ENCODE measurements at regions of chr22 and their contacts with region 1.

Region 1: DNA sequence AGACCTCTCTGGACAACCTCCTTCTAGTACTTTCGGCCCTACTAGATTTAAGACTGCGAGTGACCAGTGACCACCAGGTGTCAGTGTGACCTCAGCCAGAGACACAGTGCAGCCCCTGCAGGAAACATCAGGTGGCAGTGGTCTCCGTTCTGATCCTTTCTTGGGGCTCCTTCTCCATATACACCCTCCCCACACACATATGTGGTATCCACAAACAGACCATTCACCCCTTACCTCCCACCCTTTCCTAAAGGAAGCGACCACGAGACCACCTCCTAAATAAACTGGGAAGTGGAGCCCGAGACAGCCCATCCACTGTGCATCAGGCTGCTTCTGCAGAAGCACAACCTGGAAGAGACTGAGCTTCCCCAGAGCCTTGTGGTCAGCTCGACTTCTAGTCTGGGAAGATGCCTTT is 38.5 kb upstream of the CYP2D6 start:
- DNase-seq: peak; percentile 89
- H3K4me3 Mint-ChIP-seq: no peak overlapping the region
- H3K27ac Mint-ChIP-seq: peak overlapping the region; percentile 29
- H3K4me1 Mint-ChIP-seq: peaks cover 10% of the 10 kb centered on the region
- H3K27me3 Mint-ChIP-seq: no peaks in the 10 kb centered on the region

Region 2: GRCh38 chr22:42151924-42152635 is 17.0 kb before region 1 on chr22:
- intact Hi-C with region 1: no loop called
- DNase-seq: no peak
- H3K4me3 Mint-ChIP-seq: no peak overlapping the region
- H3K27ac Mint-ChIP-seq: no peak overlapping the region
- H3K4me1 Mint-ChIP-seq: no peaks in the 10 kb centered on the region
- H3K27me3 Mint-ChIP-seq: no peaks in the 10 kb centered on the region

Region 3: DNA sequence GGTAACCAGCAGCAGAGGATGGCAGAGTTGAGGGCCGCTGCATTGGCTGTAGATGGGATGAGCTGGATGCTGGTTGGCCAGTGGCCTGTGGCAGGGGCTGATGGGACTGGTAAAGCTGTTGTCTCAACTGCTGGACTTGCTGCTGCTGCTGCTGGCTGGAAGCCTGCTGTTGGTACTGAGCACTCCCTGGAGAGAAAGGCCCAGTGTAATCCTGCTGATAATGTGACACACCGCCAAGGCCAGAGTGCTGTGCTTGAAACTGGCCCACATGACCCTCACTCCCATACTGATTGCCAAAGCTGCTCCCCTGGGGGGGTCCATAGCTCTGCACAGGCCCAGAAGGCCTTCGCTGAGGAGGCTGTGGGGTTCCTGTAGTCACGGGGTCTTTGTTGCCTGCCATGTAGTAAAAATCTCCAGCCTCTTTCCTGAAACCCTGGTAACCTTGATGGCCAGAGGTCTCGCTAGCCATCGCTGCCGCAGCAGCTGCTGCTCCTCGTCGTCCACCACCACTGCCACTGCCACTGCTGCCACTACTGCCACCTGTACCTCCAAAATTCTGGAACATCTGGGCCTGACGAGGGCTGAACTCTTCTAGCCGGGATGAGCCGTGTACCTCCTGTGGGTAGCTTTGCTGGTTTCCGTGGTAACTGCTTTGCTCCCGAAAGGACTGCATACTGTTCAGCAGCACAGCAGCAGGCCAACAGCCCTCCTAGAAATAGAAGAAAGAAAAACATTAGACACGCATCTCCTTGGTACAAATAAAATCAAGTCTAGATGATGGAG is 45.8 kb after region 1 on chr22:
- intact Hi-C with region 1: loop called (anchors 10 kb)
- DNase-seq: no peak
- H3K4me3 Mint-ChIP-seq: no peak overlapping the region
- H3K27ac Mint-ChIP-seq: peak overlapping the region; percentile 30
- H3K4me1 Mint-ChIP-seq: peaks cover 16% of the 10 kb centered on the region
- H3K27me3 Mint-ChIP-seq: no peaks in the 10 kb centered on the region

Measured in activated CD4-positive, alpha-beta T cell treated with anti-CD3 and anti-CD28 coated beads, Interleukin-2, amount 10 ng/mL, durations not matched to agents 24 days and 14 days (primary cell).